ENCODE measurements at regions of chr11 and their contacts with region 1.

Region 1: GRCh38 chr11:3220521-3221407 is 2.2 kb upstream of the MRGPRG start:
- DNase-seq: peak; percentile 72

Region 2: DNA sequence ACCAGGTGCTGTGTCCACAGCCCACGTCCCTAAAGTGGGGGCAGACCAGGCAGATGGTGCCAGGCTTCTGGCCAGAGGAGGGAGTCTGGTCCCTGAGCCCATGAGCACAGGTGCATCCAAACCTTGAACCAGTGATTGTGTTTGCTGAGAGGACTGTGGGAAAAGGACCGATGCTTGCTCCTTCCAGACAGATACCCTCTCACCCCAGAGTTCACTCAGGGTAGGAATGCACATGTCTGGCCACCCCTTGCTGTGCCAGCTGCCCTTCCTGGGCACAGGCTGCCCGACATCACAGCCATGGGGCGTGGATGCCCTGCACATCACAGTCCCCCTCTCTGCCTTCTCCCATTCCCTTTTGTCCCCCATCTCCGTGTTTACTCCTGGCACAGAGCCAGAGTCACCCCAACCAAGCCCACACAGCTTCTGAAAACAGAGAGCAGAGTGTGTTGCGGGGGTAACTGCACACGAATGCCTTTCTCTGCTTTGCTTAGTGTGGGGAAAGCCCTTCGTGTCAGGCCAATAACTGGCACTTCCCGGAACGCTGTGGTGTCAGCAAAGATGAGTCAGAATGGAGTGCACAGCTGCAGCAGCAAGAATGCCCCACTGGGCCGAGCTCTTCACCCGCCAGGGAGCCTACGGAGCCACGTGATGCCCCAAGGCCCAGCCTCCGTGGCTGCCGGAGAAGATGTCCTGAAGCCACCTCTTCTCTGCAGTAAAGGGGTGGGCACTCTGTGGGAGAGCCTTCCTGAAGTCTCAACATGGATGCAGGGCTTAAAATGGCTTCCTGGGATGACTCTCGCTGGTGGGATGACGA is 171.1 kb before region 1 on chr11:
- intact Hi-C with region 1: loop called in 1 of 2 experiments (anchors 10 kb)
- DNase-seq: peak; percentile 96

Measured in posterior vena cava (tissue), 2 donors.